A549 (cell line): ENCODE measurements at regions of chr7 and their contacts with region 1.

Region 1: GRCh38 chr7:151110941-151111645 is 24.8 kb downstream of the AGAP3 start:
- DNase-seq: peak; percentile 70 to 92
- ATAC-seq: peak; percentile 81 to 89
- H3K4me3 ChIP-seq: no peak overlapping the region
- H3K27ac ChIP-seq: peak overlapping the region in 1 of 2 experiments; percentile 61; a peak in 2 of 6 replicates
- H3K4me1 ChIP-seq: peaks cover 38% of the 10 kb centered on the region
- CTCF ChIP-seq: peak; percentile 82
- EP300 ChIP-seq: no peak
- POLR2A ChIP-seq: no peak
- RAD21 ChIP-seq: peak; percentile 91

Region 2: DNA sequence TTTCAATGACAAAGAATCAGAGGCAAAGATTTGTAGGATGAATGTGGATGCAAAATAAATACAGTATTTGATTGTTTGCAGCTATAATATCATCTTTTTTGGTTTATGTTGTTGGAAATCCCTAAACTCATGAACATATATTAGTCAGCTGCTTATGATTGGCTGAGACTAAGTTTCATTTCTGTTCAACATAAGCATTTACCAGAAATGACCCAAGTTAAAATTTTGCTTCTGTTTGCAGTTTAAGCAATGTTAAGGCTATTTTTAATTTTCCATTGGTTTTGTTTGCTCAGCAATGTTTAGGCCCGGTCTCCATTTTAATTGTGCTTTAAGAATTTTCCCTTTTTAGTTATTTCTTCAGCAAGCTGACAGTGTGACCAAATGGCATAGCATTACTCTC is 500.9 kb before region 1 on chr7:
- CTCF ChIA-PET with region 1: no interaction called
- POLR2A ChIA-PET with region 1: no interaction called
- DNase-seq: no peak
- ATAC-seq: no peak
- H3K4me3 ChIP-seq: no peak overlapping the region
- H3K27ac ChIP-seq: no peak overlapping the region
- H3K4me1 ChIP-seq: no peaks in the 10 kb centered on the region
- CTCF ChIP-seq: no peak
- EP300 ChIP-seq: no peak
- POLR2A ChIP-seq: no peak
- RAD21 ChIP-seq: no peak

Region 3: GRCh38 chr7:150962553-150963399 is 148.3 kb before region 1 on chr7:
- CTCF ChIA-PET with region 1: interaction called, 50 read pairs
- POLR2A ChIA-PET with region 1: no interaction called
- DNase-seq: peak; percentile 38 to 92
- ATAC-seq: peak; percentile 85 to 93
- H3K4me3 ChIP-seq: no peak overlapping the region
- H3K27ac ChIP-seq: no peak overlapping the region
- H3K4me1 ChIP-seq: no peaks in the 10 kb centered on the region
- CTCF ChIP-seq: peak; percentile 71
- EP300 ChIP-seq: no peak
- POLR2A ChIP-seq: no peak
- RAD21 ChIP-seq: peak; percentile 84 to 88

Region 4: DNA sequence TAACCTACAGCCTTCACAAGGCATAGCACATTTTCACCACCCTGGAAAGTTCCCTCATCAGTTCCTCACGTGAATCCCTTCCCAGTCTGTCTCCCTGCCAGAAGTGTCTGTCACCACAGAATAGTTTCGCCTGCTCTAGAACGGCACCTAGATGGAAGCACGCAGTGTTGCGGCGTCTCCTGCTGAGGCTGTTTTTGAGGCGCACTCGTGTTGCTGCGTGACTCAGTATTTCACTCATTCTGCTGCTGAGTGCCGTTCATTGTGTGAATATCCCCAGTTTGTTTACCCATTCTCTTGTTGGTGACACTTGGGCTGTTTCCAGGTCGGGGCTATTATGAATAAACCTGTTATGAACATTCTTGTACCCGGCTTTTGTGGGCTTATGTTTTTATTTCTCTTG is 107.5 kb before region 1 on chr7:
- CTCF ChIA-PET with region 1: interaction called, 24 read pairs
- POLR2A ChIA-PET with region 1: no interaction called
- DNase-seq: peak in 1 of 2 experiments; percentile 40
- ATAC-seq: peak; percentile 37 to 40; a peak in 4 of 6 replicates
- H3K4me3 ChIP-seq: no peak overlapping the region
- H3K27ac ChIP-seq: no peak overlapping the region
- H3K4me1 ChIP-seq: 0 out of 3 replicates have a peak, but pooled peaks cover 5% of the 10 kb centered on the region
- CTCF ChIP-seq: no peak
- EP300 ChIP-seq: no peak
- POLR2A ChIP-seq: no peak
- RAD21 ChIP-seq: no peak

Region 5: DNA sequence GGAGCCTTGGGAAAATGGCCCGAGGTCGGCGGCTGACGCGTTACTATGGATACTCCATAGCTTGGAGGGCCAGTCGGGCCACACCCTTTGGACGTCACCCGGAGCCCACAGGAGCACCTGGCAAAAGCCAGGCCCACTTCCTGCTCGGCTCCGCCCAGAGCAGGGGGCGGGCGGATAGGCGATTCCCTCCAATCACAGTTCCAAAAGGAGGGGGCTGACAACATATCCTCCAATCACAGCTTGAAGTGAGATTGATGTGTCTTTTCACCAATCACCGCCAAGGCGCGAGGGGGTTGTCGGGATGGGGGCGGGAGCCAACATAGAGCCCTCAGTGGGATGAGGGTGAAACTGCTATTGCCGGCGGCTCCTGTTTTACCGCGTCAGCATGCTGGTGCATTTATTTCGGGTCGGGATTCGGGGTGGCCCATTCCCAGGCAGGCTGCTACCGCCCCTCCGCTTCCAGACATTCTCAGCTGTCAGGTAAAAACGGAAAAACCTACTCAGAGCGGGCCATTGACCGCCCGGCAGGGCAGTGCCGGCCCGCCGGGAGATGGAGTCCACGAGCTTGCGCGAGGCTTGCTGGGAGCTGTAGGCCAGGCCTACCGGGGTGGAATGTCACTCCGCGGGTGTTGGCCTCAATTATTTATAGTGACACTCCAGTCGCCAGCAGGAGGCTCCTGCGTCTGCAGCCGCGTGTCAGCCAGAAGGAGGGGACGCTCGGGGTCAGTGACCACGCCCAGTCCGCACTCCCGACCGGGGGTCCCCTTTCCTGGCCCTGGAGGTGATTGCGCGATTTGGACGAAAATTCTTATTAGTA is 82.8 kb before region 1 on chr7 and contains the start of gene ABCB8:
- CTCF ChIA-PET with region 1: interaction called, 28 read pairs
- POLR2A ChIA-PET with region 1: no interaction called
- DNase-seq: peak; percentile 99 to 100
- ATAC-seq: peak; percentile 95 to 96
- H3K4me3 ChIP-seq: peak within 1 kb of the TSS; percentile 49
- H3K27ac ChIP-seq: peak within 1 kb of the TSS; percentile 73 to 90
- H3K4me1 ChIP-seq: peaks cover 21% of the 10 kb centered on the region; the same call in 2 of the 3 replicates
- CTCF ChIP-seq: peak; percentile 53
- EP300 ChIP-seq: no peak
- POLR2A ChIP-seq: peak; percentile 61
- RAD21 ChIP-seq: peak; percentile 56 to 65
- polyA plus RNA-seq, gene ABCB8: 19.6 and 22.7 TPM in 2 replicates

Region 6: DNA sequence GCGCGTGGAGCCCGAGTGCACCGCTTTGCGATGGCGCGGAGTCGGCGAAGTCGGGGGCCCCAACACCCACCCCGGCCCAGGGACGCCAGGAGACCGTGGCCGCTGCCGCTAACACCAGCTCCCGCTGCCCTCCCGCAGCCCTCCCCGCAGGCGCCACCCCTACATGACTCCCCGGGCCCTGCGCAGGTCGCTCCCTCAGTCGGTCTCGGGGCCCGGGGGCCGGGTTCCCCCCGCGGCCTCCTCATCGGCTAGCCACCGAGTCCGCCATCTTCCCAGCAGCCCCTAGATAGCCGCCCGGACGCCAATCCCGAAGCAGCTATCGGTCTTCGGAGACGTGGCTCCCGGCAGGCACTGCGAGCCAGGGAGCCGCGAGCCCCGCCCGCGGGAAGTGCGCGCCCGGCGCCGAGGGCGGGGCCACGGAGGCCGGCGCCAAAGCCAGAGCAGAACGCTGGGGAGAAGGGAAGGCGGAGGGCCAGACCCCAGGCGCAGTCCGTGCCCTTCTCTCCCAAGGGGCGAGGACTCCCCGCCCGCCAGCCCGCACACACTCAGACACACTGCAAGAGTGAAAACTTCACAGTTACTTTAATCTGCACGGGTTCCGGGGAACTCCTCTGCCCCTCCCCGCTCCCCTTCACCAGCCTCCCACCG is 30.4 kb before region 1 on chr7 and contains the start of gene FASTK:
- CTCF ChIA-PET with region 1: interaction called, 412 read pairs
- POLR2A ChIA-PET with region 1: interaction called, 4 read pairs
- DNase-seq: peak; percentile 89 to 92
- ATAC-seq: peak; percentile 51 to 82
- H3K4me3 ChIP-seq: peak within 1 kb of the TSS; percentile 93
- H3K27ac ChIP-seq: peak within 1 kb of the TSS; percentile 98
- H3K4me1 ChIP-seq: peaks cover 61% of the 10 kb centered on the region
- CTCF ChIP-seq: no peak
- EP300 ChIP-seq: no peak
- POLR2A ChIP-seq: peak; percentile 82
- RAD21 ChIP-seq: no peak
- polyA plus RNA-seq, gene FASTK: 38.5 and 51.7 TPM in 2 replicates